ENCODE measurements at regions of chr4 and their contacts with region 1.

Region 1: GRCh38 chr4:103091601-103092223 is 7.9 kb downstream of the BDH2 start:
- DNase-seq: peak; percentile 33
- H3K4me3 Mint-ChIP-seq: peak overlapping the region; percentile 54
- H3K27ac Mint-ChIP-seq: peak overlapping the region; percentile 65
- H3K4me1 Mint-ChIP-seq: peaks cover 24% of the 10 kb centered on the region
- H3K27me3 Mint-ChIP-seq: no peaks in the 10 kb centered on the region

Region 2: DNA sequence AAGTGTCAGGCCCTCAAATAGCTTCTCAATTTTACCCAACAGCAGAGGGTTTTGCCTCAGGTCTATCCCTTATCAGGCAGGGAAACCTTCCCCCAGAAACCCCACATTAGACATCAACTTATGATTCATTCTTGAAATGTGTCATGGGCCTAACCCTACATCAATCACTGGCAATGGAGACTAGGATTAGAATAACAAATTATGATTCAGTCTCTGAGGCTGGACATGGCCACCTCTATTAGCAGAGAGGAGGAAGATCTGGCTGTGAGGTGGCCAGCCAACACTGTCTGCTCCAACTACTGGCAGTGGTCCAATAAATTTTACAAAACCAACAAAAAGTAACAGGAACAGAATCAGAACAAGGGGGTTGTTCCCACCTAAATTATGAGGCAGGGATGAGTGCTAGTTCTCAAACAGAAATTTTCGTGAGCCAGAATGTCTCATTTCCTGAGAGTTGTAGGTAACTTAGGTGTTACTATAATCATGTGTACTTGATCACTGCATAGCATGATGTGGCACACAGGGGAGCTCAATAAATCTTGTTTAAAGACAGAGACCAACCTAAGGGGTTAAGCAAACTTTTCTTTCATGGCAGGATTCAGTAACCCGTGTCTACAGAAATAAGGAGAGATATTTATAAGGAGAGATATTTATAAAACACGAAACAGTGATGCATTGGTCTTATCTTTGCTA is 463.7 kb before region 1 on chr4:
- intact Hi-C with region 1: loop called (anchors 2 kb)
- DNase-seq: no peak
- H3K4me3 Mint-ChIP-seq: no peak overlapping the region
- H3K27ac Mint-ChIP-seq: peak overlapping the region; percentile 74
- H3K4me1 Mint-ChIP-seq: peaks cover 46% of the 10 kb centered on the region
- H3K27me3 Mint-ChIP-seq: no peaks in the 10 kb centered on the region

Region 3: GRCh38 chr4:103046416-103047290 is 45.1 kb before region 1 on chr4:
- intact Hi-C with region 1: loop called (anchors 1 kb)
- DNase-seq: no peak
- H3K4me3 Mint-ChIP-seq: no peak overlapping the region
- H3K27ac Mint-ChIP-seq: no peak overlapping the region
- H3K4me1 Mint-ChIP-seq: peaks cover 18% of the 10 kb centered on the region
- H3K27me3 Mint-ChIP-seq: no peaks in the 10 kb centered on the region

Measured in activated T-helper 2 cell treated with anti-CD3 and anti-CD28 coated beads, Interferon-gamma antibody, Interleukin-2, Interleukin-4, amounts not matched to agents 10 μg/mL and 5 μg/mL and 100 μg/mL, durations not matched to agents 14 hours and 24 hours and 36 hours (primary cell).